GM12878 (cell line): ENCODE measurements at regions of chr2 and their contacts with region 1.

Region 1: DNA sequence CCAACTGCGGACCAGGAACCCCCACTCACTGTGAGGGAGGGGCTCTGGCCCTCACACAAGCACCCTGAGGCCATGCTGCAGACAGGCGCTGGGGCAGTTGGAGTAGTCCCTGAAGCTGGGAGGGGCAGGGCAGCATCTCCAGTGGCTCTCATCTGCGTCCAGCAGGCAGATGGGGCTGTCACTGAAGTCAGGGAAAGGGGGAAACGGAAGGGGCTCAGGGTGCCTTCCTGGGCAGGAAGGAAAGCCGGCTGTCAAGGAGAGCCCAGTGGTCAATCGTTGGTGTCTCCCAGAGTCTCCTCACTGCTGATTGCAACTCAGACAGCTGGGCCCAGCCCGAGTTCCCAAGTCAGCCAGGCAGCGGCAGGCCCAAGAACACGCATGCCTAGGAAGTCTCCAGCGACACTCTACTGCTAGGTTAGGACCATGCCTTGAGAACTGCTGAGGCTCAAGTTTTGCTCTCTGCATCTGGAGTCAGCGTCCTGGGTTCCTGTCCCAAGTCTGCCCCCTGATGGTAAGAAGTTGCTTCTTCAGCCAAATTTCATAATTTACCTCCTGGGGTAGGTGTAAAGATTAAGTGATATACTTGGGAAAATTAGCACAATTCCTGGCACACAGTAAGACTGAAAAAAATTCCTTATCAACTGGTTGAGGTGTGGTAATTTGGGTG is 27.5 kb upstream of the NMUR1 start:
- DNase-seq: peak; percentile 49
- ATAC-seq: peak; percentile 95
- H3K4me3 ChIP-seq: no peak overlapping the region
- H3K27ac ChIP-seq: no peak overlapping the region
- H3K4me1 ChIP-seq: peaks cover 20% of the 10 kb centered on the region
- H3K27me3 ChIP-seq: no peaks in the 10 kb centered on the region
- CTCF ChIP-seq: peak; percentile 66 to 87 (median 74)
- EP300 ChIP-seq: no peak
- POLR2A ChIP-seq: no peak
- RAD21 ChIP-seq: peak; percentile 92

Region 2: GRCh38 chr2:231364961-231365810 is 192.5 kb before region 1 on chr2:
- CTCF ChIA-PET with region 1: no interaction called
- POLR2A ChIA-PET with region 1: no interaction called
- RAD21 ChIA-PET with region 1: no interaction called
- SMC1A ChIA-PET with region 1: no interaction called
- in situ Hi-C with region 1: no loop called
- intact Hi-C with region 1: no loop called
- DNase-seq: no peak
- ATAC-seq: no peak
- H3K4me3 ChIP-seq: no peak overlapping the region
- H3K27ac ChIP-seq: no peak overlapping the region
- H3K4me1 ChIP-seq: peaks cover 15% of the 10 kb centered on the region
- H3K27me3 ChIP-seq: no peaks in the 10 kb centered on the region
- CTCF ChIP-seq: no peak
- EP300 ChIP-seq: no peak
- POLR2A ChIP-seq: no peak
- RAD21 ChIP-seq: no peak

Region 3: DNA sequence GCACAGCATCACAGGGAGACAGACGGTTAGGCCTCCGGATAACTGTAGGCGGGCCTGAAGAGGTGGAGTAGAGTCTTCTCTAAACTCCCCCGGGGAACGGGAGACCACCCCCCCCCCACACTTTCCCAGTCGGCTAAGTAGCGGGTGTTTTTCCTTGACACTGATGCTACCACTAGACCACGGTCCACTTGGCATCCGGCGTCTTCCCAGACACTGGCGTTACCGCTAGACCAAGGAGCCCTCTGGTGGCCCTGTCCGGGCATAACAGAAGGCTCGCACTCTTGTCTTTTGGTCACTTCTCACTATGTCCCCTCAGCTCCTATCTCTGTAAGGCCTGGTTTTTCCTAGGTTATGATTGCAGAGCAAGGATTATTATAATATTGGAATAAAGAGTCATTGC is 67.7 kb before region 1 on chr2:
- CTCF ChIA-PET with region 1: no interaction called
- POLR2A ChIA-PET with region 1: no interaction called
- RAD21 ChIA-PET with region 1: no interaction called
- SMC1A ChIA-PET with region 1: no interaction called
- in situ Hi-C with region 1: no loop called
- intact Hi-C with region 1: no loop called
- DNase-seq: no peak
- ATAC-seq: no peak
- H3K4me3 ChIP-seq: no peak overlapping the region
- H3K27ac ChIP-seq: no peak overlapping the region
- H3K4me1 ChIP-seq: peaks cover 5% of the 10 kb centered on the region; the same call in 1 of the 2 replicates
- H3K27me3 ChIP-seq: no peaks in the 10 kb centered on the region
- CTCF ChIP-seq: peak in 2 of 3 experiments; percentile 11 to 31; a peak in 1 of 6 replicates
- EP300 ChIP-seq: no peak
- POLR2A ChIP-seq: no peak
- RAD21 ChIP-seq: peak; percentile 30; the same call in 1 of the 2 replicates

Region 4: GRCh38 chr2:231514103-231514950 is 43.4 kb before region 1 on chr2:
- CTCF ChIA-PET with region 1: interaction called, 84 read pairs
- POLR2A ChIA-PET with region 1: interaction called, 3 read pairs
- RAD21 ChIA-PET with region 1: interaction called, 17 read pairs
- SMC1A ChIA-PET with region 1: interaction called, 31 read pairs
- in situ Hi-C with region 1: no loop called
- intact Hi-C with region 1: loop called (anchors 1 kb)
- DNase-seq: peak; percentile 81
- ATAC-seq: peak; percentile 100
- H3K4me3 ChIP-seq: peak overlapping the region; percentile 91
- H3K27ac ChIP-seq: peak overlapping the region; percentile 82
- H3K4me1 ChIP-seq: peaks cover 9% of the 10 kb centered on the region
- H3K27me3 ChIP-seq: no peaks in the 10 kb centered on the region
- CTCF ChIP-seq: no peak
- EP300 ChIP-seq: no peak
- POLR2A ChIP-seq: peak; percentile 97
- RAD21 ChIP-seq: no peak

Region 5: GRCh38 chr2:231530091-231531011 is 27.4 kb before region 1 on chr2 and contains the start of gene NMUR1:
- CTCF ChIA-PET with region 1: interaction called, 132 read pairs
- POLR2A ChIA-PET with region 1: interaction called, 9 read pairs
- RAD21 ChIA-PET with region 1: interaction called, 59 read pairs
- SMC1A ChIA-PET with region 1: interaction called, 50 read pairs
- in situ Hi-C with region 1: no loop called
- intact Hi-C with region 1: loop called (anchors 1 kb)
- DNase-seq: no peak
- ATAC-seq: peak; percentile 97
- H3K4me3 ChIP-seq: peak within 1 kb of the TSS; percentile 41; the same call in 1 of the 2 replicates
- H3K27ac ChIP-seq: no peak within 1 kb of the TSS
- H3K4me1 ChIP-seq: peaks cover 5% of the 10 kb centered on the region
- H3K27me3 ChIP-seq: no peaks in the 10 kb centered on the region
- CTCF ChIP-seq: peak; percentile 71 to 85 (median 75); a peak in 5 of 6 replicates
- EP300 ChIP-seq: no peak
- POLR2A ChIP-seq: no peak
- RAD21 ChIP-seq: peak; percentile 88
- polyA plus RNA-seq, gene NMUR1: 0.02 TPM in 1 of 2 experiments, not detected in the other

Region 6: DNA sequence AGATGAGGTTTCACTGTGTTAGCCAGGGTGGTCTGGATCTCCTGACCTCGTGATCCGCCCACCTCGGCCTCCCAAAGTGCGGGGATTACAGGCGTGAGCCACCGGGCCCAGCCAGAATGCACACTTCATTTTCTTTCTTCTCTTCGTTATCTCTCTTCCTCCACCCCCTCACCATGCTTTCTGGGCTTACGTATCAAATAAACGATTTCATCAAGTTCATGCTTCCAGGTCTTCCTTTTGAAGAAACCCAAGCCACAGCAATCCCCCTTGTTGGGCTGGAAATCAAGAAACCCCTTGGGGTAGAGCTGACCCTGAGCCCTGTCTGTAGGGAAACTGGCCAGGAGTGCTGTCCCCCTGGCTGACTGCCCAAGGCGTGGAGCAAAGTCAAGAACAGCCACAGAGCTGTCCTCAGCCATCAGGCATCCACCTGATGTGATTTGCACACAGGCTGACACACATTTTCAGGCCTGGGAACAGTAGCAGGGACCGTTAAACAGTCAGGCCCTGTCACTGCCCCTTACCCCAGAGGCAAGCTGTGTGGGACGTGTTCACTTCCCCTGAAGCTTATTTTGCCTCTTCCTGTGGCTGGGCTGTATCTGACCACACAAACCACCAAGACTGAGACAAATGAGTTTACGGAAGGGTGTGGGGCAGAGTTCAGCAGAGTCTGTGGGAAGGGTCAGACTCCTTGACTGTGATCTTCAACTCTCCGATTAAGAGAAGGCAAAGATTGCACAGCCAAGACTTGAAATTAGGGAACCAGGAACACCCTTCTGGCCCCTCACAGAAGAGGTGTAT is 12.4 kb before region 1 on chr2:
- CTCF ChIA-PET with region 1: interaction called, 48 read pairs
- POLR2A ChIA-PET with region 1: interaction called, 9 read pairs
- RAD21 ChIA-PET with region 1: interaction called, 18 read pairs
- SMC1A ChIA-PET with region 1: interaction called, 21 read pairs
- in situ Hi-C with region 1: no loop called
- intact Hi-C with region 1: no loop called
- DNase-seq: peak; percentile 98
- ATAC-seq: peak; percentile 99
- H3K4me3 ChIP-seq: peak overlapping the region; percentile 43; the same call in 1 of the 2 replicates
- H3K27ac ChIP-seq: peak overlapping the region; percentile 97
- H3K4me1 ChIP-seq: peaks cover 30% of the 10 kb centered on the region
- H3K27me3 ChIP-seq: no peaks in the 10 kb centered on the region
- CTCF ChIP-seq: no peak
- EP300 ChIP-seq: peak; percentile 89 to 94
- POLR2A ChIP-seq: peak; percentile 96
- RAD21 ChIP-seq: no peak; the same call in 1 of the 2 replicates

Region 7: DNA sequence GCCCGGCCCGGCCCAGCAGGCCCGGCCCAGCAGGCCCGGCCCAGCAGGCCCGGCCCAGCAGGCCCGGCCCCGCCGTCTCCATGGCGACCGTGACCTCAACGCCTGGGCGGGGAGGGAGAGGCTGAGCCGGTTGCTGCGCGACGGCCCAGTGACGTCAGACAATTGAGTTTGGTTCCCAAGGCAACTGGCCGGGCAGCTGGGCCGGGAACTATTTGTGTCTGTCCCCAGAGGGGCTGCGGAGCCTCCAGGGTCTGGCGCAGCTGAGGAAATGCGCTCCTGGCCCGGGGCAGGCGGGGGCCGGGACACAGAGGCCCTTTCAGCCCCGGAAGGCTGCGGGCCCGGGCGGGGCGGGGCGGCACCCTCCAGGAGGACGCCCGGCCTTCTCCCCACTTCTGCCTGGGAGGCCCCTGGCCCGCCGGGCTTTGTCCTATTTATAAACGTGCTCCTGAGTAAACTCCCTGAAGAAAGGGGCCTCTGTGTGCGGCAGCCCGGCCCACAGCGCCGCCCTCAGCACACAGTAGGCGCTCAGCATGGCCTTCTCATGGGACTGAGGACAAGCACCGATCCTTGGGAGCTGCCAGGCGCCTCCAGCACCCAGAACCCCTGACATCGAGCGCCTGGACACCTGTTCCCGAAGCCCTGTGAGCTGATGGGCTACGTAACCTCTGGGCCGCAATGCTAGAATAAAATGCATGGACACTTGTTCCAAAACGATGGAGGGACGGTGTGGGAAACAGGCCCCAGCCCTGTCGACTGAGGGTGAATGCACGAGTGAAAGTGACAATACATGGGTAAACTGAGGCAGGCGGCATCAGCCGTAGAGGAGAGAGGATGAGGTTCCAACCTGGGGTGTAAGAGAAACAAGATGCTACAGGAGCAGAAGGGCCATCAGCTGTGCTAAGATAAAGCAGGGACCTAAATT is 47.2 kb after region 1 on chr2:
- CTCF ChIA-PET with region 1: interaction called, 218 read pairs
- POLR2A ChIA-PET with region 1: interaction called, 3 read pairs
- RAD21 ChIA-PET with region 1: interaction called, 118 read pairs
- SMC1A ChIA-PET with region 1: interaction called, 112 read pairs
- in situ Hi-C with region 1: no loop called
- intact Hi-C with region 1: no loop called
- DNase-seq: peak; percentile 83
- ATAC-seq: peak; percentile 84
- H3K4me3 ChIP-seq: peak overlapping the region; percentile 28; the same call in 1 of the 2 replicates
- H3K27ac ChIP-seq: peak overlapping the region; percentile 58
- H3K4me1 ChIP-seq: peaks cover 17% of the 10 kb centered on the region
- H3K27me3 ChIP-seq: no peaks in the 10 kb centered on the region
- CTCF ChIP-seq: peak in 1 of 3 experiments; percentile 27; a peak in 1 of 6 replicates
- EP300 ChIP-seq: peak; percentile 41 to 91; a peak in 3 of 4 replicates
- POLR2A ChIP-seq: no peak; the same call in 1 of the 2 replicates
- RAD21 ChIP-seq: no peak